PC-9 (cell line): ENCODE measurements at regions of chr5 and their contacts with region 1.

Region 1: GRCh38 chr5:69042915-69043658 is 50.7 kb upstream of the SLC30A5 start:
- DNase-seq: peak; percentile 71 to 77
- H3K4me3 ChIP-seq: peak overlapping the region; percentile 64
- H3K27ac ChIP-seq: peak overlapping the region; percentile 42
- H3K4me1 ChIP-seq: peaks cover 17% of the 10 kb centered on the region
- H3K27me3 ChIP-seq: no peaks in the 10 kb centered on the region
- CTCF ChIP-seq: peak; percentile 92

Region 2: DNA sequence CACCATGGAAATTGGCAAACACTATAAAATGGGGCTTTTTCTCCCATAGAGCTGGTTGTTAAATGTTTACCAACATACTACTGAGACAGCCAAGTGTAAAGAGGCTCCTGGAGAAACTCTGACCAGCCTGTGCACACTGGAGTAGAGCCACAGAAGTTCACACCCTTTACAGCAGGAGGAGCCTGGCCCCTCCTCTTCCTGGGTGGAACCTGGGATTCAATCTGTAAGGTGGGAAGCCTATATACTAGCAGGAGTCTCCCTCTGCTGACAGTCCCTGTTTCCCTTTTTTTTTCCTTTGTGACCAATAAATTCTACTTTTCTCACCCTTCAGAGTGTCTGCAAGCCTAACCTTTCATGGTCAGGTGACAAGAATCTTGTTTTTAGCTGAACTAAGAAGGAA is 40.3 kb after region 1 on chr5:
- CTCF ChIA-PET with region 1: interaction called, 3 read pairs
- POLR2A ChIA-PET with region 1: no interaction called
- intact Hi-C with region 1: loop called (anchors 2 kb)
- DNase-seq: peak; percentile 25 to 49
- H3K4me3 ChIP-seq: no peak overlapping the region
- H3K27ac ChIP-seq: no peak overlapping the region
- H3K4me1 ChIP-seq: peaks cover 16% of the 10 kb centered on the region
- H3K27me3 ChIP-seq: no peaks in the 10 kb centered on the region
- CTCF ChIP-seq: peak; percentile 46